Activated B cell treated with CpG ODN at 0.5 μM for 24 hours (primary cell): ENCODE measurements at regions of chr19 and their contacts with region 1.

Region 1: DNA sequence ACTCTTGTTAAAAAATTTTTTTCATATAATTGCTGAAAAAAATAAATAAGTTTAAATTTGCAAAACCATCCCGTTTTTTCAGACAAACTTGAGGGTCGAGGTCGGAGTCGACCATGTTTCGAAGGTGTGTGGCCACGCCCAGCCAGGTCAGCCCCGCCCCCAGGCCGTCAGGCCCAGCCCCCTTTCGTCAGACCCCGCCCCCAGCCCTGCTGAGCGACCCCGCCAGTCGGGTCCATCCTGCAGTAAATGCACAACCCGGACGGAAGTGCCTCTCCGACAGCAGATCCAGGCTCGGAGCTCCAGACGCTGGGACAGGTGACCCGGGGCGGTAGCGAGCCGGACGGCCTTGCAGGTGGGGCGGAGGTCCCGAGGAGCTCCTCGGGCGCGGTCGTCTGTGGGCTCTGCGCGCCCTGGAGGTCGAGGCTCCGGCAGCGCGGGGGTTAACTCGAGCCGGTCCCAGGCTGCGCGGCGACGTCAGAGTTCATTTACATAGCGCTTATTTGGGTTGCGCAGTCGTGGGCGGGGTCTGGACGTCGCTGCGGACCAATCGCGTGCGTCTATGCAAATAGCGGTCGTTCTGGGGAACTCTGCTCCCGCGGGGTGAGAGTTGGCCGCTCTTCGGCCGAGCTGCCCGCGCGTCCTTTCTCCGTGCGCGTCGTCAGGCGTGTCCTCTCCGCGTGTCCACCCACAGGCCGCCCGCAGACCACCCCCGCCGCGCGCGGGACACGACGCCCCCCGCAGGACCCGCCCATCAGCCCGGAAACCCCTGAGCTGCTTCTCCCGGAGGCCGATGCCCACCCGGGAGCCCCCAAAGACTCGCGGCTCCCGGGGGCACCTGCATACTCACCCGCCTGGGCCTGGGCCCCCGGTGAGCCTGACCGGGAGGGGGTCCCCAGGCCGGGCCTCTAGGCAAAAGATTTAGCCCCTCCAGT is at the start of gene OCEL1:
- DNase-seq: peak; percentile 95
- ATAC-seq: peak; percentile 90
- H3K4me3 Mint-ChIP-seq: peak within 1 kb of the TSS; percentile 95
- H3K27ac Mint-ChIP-seq: peak within 1 kb of the TSS; percentile 97
- H3K4me1 Mint-ChIP-seq: peaks cover 6% of the 10 kb centered on the region
- H3K27me3 Mint-ChIP-seq: no peaks in the 10 kb centered on the region
- CTCF ChIP-seq: no peak
- total RNA-seq, gene OCEL1: 22.4 and 25.8 TPM in 2 replicates

Region 2: DNA sequence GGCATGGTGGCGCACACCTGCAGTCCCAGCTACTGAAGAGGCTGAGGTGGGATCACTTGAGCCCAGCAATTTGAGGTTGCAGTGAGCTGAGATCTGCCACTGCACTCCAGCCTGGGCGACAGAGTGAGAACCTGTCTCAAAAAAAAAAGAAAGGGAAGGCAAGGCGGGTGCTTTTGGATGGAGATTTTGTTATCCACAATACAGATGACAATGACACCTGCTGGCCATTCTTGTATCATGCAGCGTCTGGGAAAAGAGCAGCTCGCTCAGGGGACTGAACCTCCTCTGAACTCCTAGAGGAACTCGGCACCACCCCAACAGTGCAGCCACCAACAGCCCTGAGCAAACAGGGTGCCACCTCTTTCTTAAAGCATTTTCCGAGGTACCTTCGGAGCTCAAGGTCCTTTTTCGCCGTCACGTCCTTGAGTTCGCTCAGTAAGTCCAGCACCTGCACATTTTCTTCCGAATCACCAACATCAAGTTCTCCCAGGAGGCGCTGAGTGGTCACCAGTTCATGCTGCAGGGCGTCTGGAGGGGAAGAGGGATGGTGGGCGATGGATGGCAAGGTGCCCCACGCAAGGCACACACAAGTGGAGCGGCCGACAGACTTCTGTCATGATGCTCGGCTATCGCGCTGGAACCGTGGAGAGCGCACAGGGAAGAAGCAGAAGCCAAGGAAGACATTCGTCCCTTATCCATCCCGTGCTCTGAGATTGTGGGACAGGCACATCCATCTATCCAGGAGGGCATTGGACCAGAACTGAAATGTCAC is 173.6 kb before region 1 on chr19:
- CTCF ChIA-PET with region 1: no interaction called
- POLR2A ChIA-PET with region 1: no interaction called
- intact Hi-C with region 1: no loop called
- DNase-seq: no peak
- ATAC-seq: peak; percentile 28
- H3K4me3 Mint-ChIP-seq: no peak overlapping the region
- H3K27ac Mint-ChIP-seq: no peak overlapping the region
- H3K4me1 Mint-ChIP-seq: no peaks in the 10 kb centered on the region
- H3K27me3 Mint-ChIP-seq: no peaks in the 10 kb centered on the region
- CTCF ChIP-seq: no peak

Region 3: DNA sequence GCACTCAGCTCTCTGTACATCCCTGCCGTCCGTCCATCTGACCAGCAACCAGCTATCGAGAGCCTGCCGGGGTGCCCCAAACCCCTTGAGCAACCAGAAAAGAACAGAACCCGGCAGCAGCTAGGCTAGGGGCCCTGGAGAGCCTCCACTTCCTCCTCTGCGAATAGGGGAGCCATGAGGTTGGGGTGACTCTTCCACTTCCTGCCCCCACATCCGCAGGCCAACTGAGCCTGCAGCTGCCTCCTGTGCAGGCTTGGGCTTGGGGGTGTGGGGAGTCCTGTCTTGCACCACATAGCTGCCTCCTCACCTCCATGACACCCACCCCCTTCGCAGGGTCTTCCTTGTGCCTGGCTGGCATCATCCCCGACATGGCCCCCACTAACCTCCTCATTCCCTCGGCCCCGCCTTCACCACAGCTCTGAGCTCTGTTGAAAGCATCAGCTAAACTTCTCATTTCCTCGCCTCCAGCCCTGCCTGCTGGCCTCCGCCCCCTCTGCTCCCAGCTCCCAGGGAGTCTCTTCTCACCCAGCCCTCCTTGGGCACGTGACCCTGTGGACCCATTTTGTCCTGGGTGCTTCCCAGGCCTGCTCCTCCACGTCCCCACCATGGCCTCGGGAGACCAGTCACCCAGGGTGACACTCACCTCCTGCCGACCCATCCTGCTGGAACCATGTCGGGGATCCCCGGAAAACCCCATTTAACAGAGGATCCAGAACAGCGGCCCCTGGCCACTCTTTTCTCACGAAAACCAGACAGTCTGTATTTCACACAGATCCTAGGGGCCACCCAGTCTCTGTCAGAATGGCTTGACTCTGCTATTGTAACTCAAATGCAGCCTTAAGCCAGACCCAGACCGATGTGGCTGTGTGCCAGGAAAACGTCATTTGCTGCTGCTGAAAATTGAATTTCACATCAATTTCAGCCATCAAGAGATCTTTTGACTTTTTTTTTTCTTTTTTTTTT is 100.3 kb before region 1 on chr19:
- CTCF ChIA-PET with region 1: no interaction called
- POLR2A ChIA-PET with region 1: interaction called, 3 read pairs
- intact Hi-C with region 1: loop called (anchors 5 kb)
- DNase-seq: peak; percentile 51
- ATAC-seq: peak; percentile 77
- H3K4me3 Mint-ChIP-seq: peak overlapping the region; percentile 84
- H3K27ac Mint-ChIP-seq: peak overlapping the region; percentile 98
- H3K4me1 Mint-ChIP-seq: peaks cover 66% of the 10 kb centered on the region
- H3K27me3 Mint-ChIP-seq: no peaks in the 10 kb centered on the region
- CTCF ChIP-seq: no peak

Region 4: DNA sequence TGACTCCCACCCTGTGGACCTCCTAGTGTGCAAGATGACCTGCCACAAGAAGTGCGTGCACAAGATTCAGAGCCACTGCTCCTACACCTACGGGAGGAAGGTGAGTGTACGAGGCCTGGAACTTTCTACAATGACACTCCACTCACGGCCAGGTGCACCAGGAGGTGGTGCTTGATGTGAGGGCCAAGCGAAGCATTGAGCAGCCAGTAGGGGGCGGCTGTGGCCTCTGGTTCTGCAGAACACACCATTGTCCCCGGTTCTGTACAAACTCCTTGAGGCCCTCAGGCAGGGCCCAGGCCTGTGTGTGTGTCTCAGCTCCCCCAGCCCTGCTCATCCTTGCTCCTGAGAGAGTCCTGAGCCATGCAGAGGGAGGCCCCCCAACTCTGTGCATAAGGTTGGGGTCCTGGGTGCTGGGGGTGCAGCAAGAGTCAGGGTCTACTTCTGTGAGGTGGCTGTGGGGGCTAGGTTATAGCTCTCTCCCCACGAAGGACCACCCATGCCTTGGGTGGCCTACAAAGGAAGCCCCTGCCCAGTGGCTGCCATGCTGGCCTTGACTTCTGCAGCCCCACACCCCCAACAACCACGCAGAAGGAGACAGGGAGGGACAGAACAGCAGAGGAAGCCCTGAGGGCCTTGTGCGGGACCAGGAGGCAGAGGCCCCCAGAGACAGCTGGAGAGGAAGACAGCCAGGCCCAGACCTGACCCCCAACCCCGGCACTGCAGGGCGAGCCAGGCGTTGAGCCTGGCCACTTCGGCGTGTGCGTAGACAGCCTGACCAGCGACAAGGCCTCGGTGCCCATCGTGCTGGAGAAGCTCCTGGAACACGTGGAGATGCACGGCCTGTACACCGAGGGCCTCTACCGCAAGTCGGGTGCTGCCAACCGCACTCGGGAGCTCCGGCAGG is 20.8 kb before region 1 on chr19:
- CTCF ChIA-PET with region 1: no interaction called
- POLR2A ChIA-PET with region 1: no interaction called
- intact Hi-C with region 1: loop called (anchors 2 kb)
- DNase-seq: peak; percentile 48
- ATAC-seq: peak; percentile 72
- H3K4me3 Mint-ChIP-seq: no peak overlapping the region
- H3K27ac Mint-ChIP-seq: no peak overlapping the region
- H3K4me1 Mint-ChIP-seq: peaks cover 15% of the 10 kb centered on the region
- H3K27me3 Mint-ChIP-seq: no peaks in the 10 kb centered on the region
- CTCF ChIP-seq: no peak

Region 5: DNA sequence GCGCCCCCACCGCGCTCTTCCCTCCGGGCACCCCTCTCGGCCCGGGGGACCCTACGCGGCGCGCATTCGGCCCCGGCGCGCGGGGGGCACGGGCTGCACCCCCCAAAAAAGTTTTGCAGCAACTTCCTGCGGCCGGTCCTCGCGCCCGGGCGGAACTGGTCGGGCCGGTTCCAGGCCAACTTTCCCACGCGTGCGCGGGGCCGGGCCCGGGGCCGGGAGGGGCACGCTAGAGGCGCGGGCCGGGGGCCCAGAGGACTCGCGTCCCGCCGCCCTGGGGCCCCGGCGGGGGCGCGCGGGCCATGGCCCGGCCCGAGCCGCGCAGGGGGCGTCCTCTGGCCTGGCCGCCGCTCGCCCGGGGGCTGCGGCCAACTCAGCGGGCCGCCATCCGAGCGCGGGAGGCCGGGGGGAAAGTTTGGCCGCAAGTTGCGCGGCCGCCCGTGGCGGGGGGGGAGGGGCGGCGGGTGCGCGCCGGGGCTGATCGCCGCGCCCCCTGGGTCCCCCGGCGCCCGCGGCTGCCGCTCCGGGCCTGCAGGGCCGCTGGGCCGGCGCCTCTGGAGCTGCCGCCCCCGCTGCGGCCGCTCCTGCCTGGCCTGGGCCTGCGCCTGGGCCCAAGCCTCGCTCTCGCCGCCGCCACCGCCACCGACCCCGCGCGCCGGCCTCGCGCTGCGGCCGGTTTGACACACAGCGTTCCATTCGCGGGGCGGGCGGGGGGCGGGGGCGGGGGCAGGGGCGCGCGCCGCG is 19.1 kb after region 1 on chr19 and contains the start of gene NR2F6:
- CTCF ChIA-PET with region 1: no interaction called
- POLR2A ChIA-PET with region 1: interaction called, 16 read pairs
- intact Hi-C with region 1: loop called (anchors 1 kb)
- DNase-seq: no peak
- ATAC-seq: peak; percentile 39
- H3K4me3 Mint-ChIP-seq: peak within 1 kb of the TSS; percentile 92
- H3K27ac Mint-ChIP-seq: peak within 1 kb of the TSS; percentile 89
- H3K4me1 Mint-ChIP-seq: peaks cover 13% of the 10 kb centered on the region
- H3K27me3 Mint-ChIP-seq: no peaks in the 10 kb centered on the region
- CTCF ChIP-seq: no peak
- total RNA-seq, gene NR2F6: 4.3 and 4.6 TPM in 2 replicates

Region 6: DNA sequence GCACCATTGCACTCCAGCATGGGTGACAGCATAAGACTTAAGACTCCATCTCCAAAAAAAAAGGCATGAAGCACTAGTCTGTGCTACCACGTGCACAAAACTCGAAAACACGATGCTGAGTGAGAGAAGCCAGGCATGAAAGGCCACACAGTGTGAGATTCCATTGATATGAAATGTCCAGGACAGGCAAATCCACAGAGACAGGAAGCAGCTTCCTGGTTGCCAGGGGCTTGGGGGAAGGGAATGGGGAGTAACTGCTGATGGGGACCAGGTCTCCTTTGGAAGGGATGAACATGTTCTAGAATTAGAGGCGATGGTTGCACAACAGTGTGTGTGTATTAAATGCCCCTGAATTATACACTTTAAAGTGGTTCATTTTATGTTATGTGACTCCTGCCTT is 1071.0 kb after region 1 on chr19:
- CTCF ChIA-PET with region 1: no interaction called
- POLR2A ChIA-PET with region 1: interaction called, 13 read pairs
- intact Hi-C with region 1: no loop called
- DNase-seq: no peak
- ATAC-seq: no peak
- H3K4me3 Mint-ChIP-seq: no peak overlapping the region
- H3K27ac Mint-ChIP-seq: no peak overlapping the region
- H3K4me1 Mint-ChIP-seq: peaks cover 33% of the 10 kb centered on the region
- H3K27me3 Mint-ChIP-seq: no peaks in the 10 kb centered on the region
- CTCF ChIP-seq: no peak